ENCODE measurements at regions of chr7 and their contacts with region 1.

Region 1: DNA sequence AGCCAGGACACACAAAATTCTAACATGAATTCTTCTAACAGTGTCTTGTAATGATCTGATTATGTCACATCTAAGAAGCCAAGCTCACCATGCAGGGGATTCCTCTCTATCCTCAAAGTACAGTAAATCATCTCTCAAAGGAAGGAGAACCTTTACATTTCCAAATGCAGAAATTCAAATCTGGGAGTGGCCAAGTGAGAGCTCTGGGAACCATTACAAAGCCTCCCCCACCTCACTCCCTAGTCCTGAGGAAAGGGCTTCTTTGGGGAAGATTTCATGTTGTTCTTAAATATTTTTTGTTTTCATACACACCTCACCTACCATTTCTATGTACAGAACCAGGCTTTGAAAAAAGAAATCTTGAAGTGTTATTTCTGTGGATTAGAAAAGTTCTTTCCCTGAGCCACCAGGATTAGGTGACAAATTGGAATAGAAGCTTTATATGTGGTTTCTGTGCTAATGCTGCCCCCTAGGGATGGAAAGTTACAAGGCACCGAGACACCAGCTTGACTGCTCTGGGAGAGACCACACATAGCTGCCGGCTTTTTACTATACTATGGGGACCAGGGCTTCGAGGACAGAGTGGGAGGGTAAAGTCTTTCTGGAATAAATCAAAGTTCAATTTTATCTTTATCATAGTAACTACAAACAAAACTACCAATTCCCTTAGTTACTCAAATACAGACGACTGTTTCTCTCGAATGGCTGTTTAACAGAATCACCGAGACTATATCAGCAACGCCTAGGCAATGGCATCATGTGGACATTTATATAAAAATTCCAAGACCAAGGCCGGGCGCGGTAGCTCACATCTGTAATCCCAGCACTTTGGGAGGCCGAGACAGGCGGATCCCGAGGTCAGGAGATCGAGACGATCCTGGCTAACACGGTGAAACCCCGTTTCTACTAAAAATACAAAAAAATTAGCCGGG is 116.1 kb downstream of the RNF216 start:
- DNase-seq: peak; percentile 74
- ATAC-seq: peak; percentile 82
- H3K4me3 Mint-ChIP-seq: no peak overlapping the region
- H3K27ac Mint-ChIP-seq: no peak overlapping the region
- H3K4me1 Mint-ChIP-seq: peaks cover 24% of the 10 kb centered on the region
- H3K27me3 Mint-ChIP-seq: no peaks in the 10 kb centered on the region

Region 2: DNA sequence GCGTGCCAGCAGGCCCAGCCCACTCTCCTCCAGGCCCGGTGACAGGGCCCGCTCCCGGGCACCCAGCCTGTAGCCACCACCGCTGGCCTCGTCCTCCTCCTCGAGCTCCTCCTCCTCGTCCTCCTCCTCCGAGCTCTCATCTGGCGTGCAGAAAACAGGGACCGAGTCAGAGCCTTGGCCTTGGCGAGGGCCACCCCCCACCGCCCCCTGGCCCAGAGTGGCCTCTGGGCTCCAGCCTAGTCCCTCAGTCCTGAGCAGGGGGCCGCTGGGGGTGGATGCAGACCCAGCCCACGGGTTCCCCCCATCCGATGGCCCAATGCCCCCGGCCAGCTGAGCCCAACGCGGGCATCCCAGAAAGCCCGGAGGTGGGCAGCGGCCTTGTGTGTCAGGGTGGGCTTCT is 319.7 kb before region 1 on chr7:
- CTCF ChIA-PET with region 1: no interaction called
- POLR2A ChIA-PET with region 1: no interaction called
- intact Hi-C with region 1: no loop called
- DNase-seq: no peak
- ATAC-seq: no peak
- H3K4me3 Mint-ChIP-seq: no peak overlapping the region
- H3K27ac Mint-ChIP-seq: no peak overlapping the region
- H3K4me1 Mint-ChIP-seq: no peaks in the 10 kb centered on the region
- H3K27me3 Mint-ChIP-seq: no peaks in the 10 kb centered on the region

Region 3: GRCh38 chr7:5541087-5541992 is 124.0 kb before region 1 on chr7:
- CTCF ChIA-PET with region 1: no interaction called
- POLR2A ChIA-PET with region 1: no interaction called
- intact Hi-C with region 1: no loop called
- DNase-seq: no peak
- ATAC-seq: no peak
- H3K4me3 Mint-ChIP-seq: no peak overlapping the region
- H3K27ac Mint-ChIP-seq: no peak overlapping the region
- H3K4me1 Mint-ChIP-seq: peaks cover 13% of the 10 kb centered on the region
- H3K27me3 Mint-ChIP-seq: no peaks in the 10 kb centered on the region

Region 4: DNA sequence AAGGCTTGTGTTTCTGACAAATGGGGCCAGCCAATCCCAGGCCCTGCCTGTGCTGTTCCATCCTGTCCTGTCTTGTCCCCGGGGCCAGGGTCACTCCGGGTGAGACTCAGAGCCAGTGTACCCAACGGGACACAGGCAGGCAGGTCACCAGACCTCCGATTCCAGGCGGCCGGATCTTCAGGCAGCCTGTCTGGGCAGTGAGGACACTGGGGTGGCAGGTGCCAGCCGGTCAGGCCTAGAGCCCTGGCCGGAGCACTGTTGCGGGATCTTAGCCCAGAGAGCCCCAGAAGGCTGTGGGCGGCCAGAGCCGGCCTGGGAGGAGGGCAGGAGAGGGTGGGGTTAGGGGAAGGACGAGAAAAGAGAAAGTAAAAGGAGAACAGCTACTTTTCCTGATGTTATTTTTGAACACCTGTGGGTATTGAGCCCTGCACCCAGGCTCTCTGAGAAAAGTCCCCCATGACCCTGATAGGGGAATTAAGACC is 107.4 kb before region 1 on chr7:
- CTCF ChIA-PET with region 1: interaction called, 31 read pairs
- POLR2A ChIA-PET with region 1: no interaction called
- intact Hi-C with region 1: no loop called
- DNase-seq: peak; percentile 45
- ATAC-seq: no peak
- H3K4me3 Mint-ChIP-seq: peak overlapping the region; percentile 65
- H3K27ac Mint-ChIP-seq: peak overlapping the region; percentile 88
- H3K4me1 Mint-ChIP-seq: peaks cover 39% of the 10 kb centered on the region
- H3K27me3 Mint-ChIP-seq: peaks cover 2% of the 10 kb centered on the region

Region 5: DNA sequence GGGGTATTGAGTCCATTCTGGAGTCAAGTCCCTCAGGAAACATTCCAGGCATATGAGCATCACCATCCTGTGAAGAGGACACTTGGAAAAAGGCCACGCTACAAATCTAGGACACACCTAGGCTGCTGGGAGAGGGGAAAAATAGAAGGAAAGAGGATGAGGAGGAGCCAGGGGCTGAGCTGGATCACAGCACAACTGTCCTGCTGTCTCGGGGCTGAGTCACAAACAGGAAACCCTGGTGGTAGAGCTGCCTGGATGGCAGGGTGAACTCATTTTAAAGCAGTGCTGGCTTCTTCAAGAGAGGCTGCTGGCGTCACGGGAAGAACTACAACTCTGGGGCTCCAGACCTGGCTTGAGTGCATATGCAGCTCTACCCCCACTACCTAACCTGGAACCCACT is 35.4 kb before region 1 on chr7:
- CTCF ChIA-PET with region 1: interaction called, 18 read pairs
- POLR2A ChIA-PET with region 1: no interaction called
- intact Hi-C with region 1: no loop called
- DNase-seq: peak; percentile 79
- ATAC-seq: peak; percentile 84
- H3K4me3 Mint-ChIP-seq: no peak overlapping the region
- H3K27ac Mint-ChIP-seq: peak overlapping the region; percentile 75
- H3K4me1 Mint-ChIP-seq: peaks cover 29% of the 10 kb centered on the region
- H3K27me3 Mint-ChIP-seq: no peaks in the 10 kb centered on the region

Region 6: GRCh38 chr7:5646852-5647251 is 18.5 kb before region 1 on chr7:
- CTCF ChIA-PET with region 1: interaction called, 15 read pairs
- POLR2A ChIA-PET with region 1: interaction called, 3 read pairs
- intact Hi-C with region 1: no loop called
- DNase-seq: no peak
- ATAC-seq: no peak
- H3K4me3 Mint-ChIP-seq: no peak overlapping the region
- H3K27ac Mint-ChIP-seq: no peak overlapping the region
- H3K4me1 Mint-ChIP-seq: peaks cover 32% of the 10 kb centered on the region
- H3K27me3 Mint-ChIP-seq: no peaks in the 10 kb centered on the region

Region 7: GRCh38 chr7:5677538-5678294 is 12.4 kb after region 1 on chr7:
- CTCF ChIA-PET with region 1: interaction called, 42 read pairs
- POLR2A ChIA-PET with region 1: no interaction called
- intact Hi-C with region 1: no loop called
- DNase-seq: peak; percentile 73
- ATAC-seq: peak; percentile 63
- H3K4me3 Mint-ChIP-seq: no peak overlapping the region
- H3K27ac Mint-ChIP-seq: peak overlapping the region; percentile 27
- H3K4me1 Mint-ChIP-seq: peaks cover 44% of the 10 kb centered on the region
- H3K27me3 Mint-ChIP-seq: no peaks in the 10 kb centered on the region

Measured in activated CD4-positive, alpha-beta T cell treated with anti-CD3 and anti-CD28 coated beads for 36 hours (primary cell).